Caco-2 (cell line): ENCODE measurements at regions of chr5 and their contacts with region 1.

Region 1: GRCh38 chr5:139517683-139518564 is 35.4 kb upstream of the STING1 start:
- DNase-seq: peak; percentile 86 to 95
- H3K4me3 ChIP-seq: peak overlapping the region; percentile 52
- H3K4me3 Mint-ChIP-seq: peak overlapping the region; percentile 79
- H3K27ac Mint-ChIP-seq: peak overlapping the region; percentile 82
- H3K4me1 ChIP-seq: peaks cover 4% of the 10 kb centered on the region; the same call in 1 of the 2 replicates
- H3K4me1 Mint-ChIP-seq: peaks cover 10% of the 10 kb centered on the region
- H3K27me3 ChIP-seq: no peaks in the 10 kb centered on the region
- H3K27me3 Mint-ChIP-seq: no peaks in the 10 kb centered on the region
- CTCF ChIP-seq: peak; percentile 89 to 96

Region 2: DNA sequence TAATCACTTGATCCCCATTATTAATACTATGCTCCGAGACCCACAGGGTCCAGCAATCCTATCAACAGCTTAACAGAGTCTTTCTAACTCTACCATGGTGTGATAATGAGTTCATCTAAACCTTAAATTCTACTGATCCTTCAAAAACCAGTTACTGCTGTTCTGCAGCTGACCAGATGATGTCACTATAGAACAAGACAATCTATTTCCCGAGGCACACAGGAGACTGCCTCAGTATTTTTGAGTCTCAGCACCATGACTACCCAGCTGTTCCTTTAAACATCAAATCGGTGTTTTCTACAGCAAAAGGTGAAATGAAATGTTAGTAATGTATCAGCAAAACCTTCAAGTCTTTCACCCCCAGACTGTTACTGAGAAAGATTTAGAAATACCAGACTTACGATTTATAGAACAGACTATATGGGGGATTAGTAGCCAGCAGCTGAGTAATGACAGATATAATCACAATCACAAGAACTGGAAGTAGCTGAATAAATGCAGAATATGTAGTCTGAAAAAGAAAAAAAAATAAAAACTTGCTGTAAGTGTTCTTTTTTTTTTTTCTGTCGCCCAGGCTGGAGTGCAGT is 95.5 kb before region 1 on chr5:
- CTCF ChIA-PET with region 1: interaction called, 36 read pairs
- POLR2A ChIA-PET with region 1: interaction called, 5 read pairs
- intact Hi-C with region 1: loop called (anchors 1 kb)
- DNase-seq: peak; percentile 47 to 72
- H3K4me3 ChIP-seq: no peak overlapping the region
- H3K4me3 Mint-ChIP-seq: no peak overlapping the region
- H3K27ac Mint-ChIP-seq: no peak overlapping the region
- H3K4me1 ChIP-seq: no peaks in the 10 kb centered on the region
- H3K4me1 Mint-ChIP-seq: peaks cover 6% of the 10 kb centered on the region
- H3K27me3 ChIP-seq: no peaks in the 10 kb centered on the region
- H3K27me3 Mint-ChIP-seq: no peaks in the 10 kb centered on the region
- CTCF ChIP-seq: peak; percentile 77 to 89

Region 3: DNA sequence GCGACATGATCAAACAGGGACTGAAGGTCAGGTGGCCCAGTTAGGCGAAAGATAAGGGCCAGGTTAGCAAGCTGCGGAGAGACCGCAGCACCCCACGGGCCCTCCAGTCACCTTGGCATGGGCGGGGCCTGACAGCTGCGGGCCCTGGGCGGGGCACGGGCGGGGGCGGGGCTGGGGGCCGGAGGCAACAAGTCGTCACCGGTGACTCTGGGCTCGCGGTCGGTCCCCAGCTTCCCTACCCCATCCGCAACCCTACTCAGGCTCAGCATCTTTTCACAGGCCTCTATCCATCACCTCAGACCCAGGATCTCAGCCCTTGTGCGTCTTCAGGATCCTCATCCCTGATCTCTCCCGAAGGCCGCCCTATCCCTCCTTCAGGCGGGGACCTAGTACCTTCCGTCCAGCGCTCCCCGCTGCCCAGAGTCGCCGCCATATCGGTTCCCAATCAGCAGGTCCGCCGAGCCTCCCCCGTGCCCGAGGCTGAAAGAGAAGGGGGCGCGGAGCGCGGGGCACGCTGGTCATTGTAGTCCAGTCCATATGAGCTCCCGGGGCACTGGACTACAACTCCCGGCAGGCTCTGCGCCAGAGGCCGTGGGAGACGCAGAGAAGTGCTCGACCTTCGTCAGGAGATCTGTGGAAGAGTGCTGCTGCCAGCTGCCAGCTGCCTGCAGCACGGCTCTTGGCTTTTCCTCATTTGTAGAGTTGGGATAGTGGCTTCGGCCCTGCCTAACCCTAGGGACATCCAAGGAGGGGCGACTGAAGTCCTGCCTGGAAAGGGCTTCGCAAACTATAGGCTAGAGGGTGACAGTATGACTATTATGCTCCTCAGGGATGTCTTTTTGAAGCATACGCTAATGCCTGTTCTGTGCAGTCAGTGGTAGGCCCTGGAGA is 78.7 kb before region 1 on chr5 and contains the start of gene DNAJC18:
- CTCF ChIA-PET with region 1: interaction called, 9 read pairs
- POLR2A ChIA-PET with region 1: no interaction called
- intact Hi-C with region 1: loop called (anchors 1 kb)
- DNase-seq: peak; percentile 94
- H3K4me3 ChIP-seq: peak within 1 kb of the TSS; percentile 94
- H3K4me3 Mint-ChIP-seq: peak within 1 kb of the TSS; percentile 99
- H3K27ac Mint-ChIP-seq: peak within 1 kb of the TSS; percentile 96
- H3K4me1 ChIP-seq: peaks cover 22% of the 10 kb centered on the region
- H3K4me1 Mint-ChIP-seq: peaks cover 21% of the 10 kb centered on the region
- H3K27me3 ChIP-seq: no peaks in the 10 kb centered on the region
- H3K27me3 Mint-ChIP-seq: no peaks in the 10 kb centered on the region
- CTCF ChIP-seq: no peak
- total RNA-seq, gene DNAJC18: 12.5 and 14.1 TPM in 2 replicates

Region 4: DNA sequence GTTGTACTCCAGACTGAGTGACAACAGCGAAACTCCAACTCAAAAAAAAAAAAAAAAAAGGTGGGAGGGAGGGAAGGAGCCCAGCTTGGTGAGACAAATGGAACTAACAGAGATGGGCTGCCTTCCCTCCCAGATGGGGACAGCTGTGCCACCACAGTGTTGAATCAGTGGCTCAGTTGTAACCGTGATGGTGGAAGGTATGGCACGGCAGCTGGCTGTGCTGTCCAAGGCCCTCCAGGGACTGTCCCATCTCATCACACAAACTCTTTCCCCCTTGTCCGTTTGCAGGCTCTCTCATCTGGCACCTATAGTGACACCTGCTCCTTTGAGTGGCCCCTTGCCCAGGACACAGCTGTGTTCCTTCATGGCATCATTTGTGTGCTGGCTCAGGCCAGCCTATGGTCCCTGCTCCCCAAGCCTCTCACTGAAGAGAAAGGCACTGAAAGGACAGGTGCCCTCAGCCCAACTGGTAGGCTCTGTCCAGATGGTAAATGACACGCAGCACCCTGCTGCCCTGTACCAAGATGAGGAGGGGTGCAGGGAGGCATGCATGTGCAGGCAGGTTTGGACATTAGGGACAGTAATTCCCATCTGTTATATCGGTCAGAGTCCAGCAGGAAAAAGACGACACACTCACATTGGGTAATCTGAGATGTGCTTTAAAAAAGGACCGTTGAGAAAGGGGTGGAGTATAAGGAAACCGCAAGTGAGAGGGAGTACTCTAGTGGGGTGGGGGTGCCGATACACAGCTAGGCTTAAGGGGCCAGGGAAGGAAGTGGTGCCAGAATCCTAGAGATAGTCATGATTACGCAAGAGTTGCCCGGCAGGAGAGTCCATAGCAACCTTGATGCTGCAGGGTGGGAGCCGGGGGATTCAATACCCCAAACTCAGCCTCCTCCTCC is 42.8 kb before region 1 on chr5:
- CTCF ChIA-PET with region 1: interaction called, 7 read pairs
- POLR2A ChIA-PET with region 1: no interaction called
- intact Hi-C with region 1: loop called (anchors 5 kb)
- DNase-seq: no peak
- H3K4me3 ChIP-seq: no peak overlapping the region
- H3K4me3 Mint-ChIP-seq: no peak overlapping the region
- H3K27ac Mint-ChIP-seq: no peak overlapping the region
- H3K4me1 ChIP-seq: peaks cover 12% of the 10 kb centered on the region; the same call in 1 of the 2 replicates
- H3K4me1 Mint-ChIP-seq: no peaks in the 10 kb centered on the region
- H3K27me3 ChIP-seq: no peaks in the 10 kb centered on the region
- H3K27me3 Mint-ChIP-seq: no peaks in the 10 kb centered on the region
- CTCF ChIP-seq: no peak